ENCODE measurements at regions of chr9 and their contacts with region 1.

Region 1: DNA sequence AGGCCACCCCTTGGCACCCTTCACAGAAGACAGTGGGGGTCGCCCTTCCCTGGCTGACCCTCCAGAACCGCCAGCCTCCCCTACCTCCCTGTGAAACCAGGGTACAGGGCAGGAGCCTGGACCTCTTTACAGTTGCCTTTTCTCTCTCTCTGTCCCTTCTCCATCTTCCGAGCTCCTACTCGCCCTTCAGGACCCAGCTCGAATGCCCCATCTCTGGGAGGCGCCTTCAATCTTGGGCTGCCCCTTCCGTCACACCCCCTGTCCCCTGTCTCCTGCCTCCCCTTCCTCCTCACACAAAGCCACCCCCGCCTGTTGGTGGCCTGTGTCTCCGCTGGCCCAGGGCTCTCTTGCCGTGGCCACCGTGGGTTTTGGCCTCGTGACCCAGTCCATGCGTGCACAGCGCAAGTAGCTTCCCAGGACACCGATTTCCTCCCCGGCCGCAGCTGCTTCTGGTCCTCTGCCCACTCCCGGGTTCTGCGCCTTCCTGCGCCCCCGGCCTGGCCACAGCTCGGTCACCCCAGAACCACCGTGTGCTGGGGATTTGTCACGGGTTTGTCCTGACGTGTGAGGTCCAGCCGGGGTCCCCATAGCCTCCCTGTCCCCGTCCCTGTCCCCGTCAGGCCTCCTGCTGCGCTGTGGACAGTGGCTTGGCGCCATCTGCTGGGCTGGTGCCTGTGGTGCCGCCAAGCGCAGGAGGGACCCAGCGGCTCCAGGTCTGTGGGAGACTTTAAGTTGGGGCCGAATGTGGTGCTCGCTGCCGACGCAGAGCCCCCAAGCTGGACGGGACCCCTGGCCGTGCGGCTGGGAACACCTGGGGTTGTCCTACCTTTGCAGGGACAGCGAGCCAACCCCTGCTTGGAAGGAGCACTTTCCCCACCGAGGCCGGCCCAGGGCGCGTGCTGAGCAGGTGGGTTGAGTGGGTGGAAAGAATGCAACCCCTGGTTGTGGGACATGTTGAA is 4.0 kb upstream of the TMEM250 start:
- DNase-seq: peak; percentile 75
- H3K4me3 ChIP-seq: no peak overlapping the region
- H3K27ac ChIP-seq: no peak overlapping the region
- H3K4me1 ChIP-seq: peaks cover 18% of the 10 kb centered on the region
- H3K27me3 ChIP-seq: no peaks in the 10 kb centered on the region
- CTCF ChIP-seq: peak; percentile 98

Region 2: GRCh38 chr9:135736272-135736978 is 386.3 kb before region 1 on chr9:
- CTCF ChIA-PET with region 1: no interaction called
- POLR2A ChIA-PET with region 1: no interaction called
- intact Hi-C with region 1: no loop called
- DNase-seq: no peak
- H3K4me3 ChIP-seq: no peak overlapping the region
- H3K27ac ChIP-seq: no peak overlapping the region
- H3K4me1 ChIP-seq: no peaks in the 10 kb centered on the region
- H3K27me3 ChIP-seq: peaks cover 9% of the 10 kb centered on the region
- CTCF ChIP-seq: no peak

Region 3: GRCh38 chr9:135797507-135798262 is 325.0 kb before region 1 on chr9:
- CTCF ChIA-PET with region 1: no interaction called
- POLR2A ChIA-PET with region 1: no interaction called
- intact Hi-C with region 1: loop called (anchors 10 kb)
- DNase-seq: peak; percentile 76
- H3K4me3 ChIP-seq: no peak overlapping the region
- H3K27ac ChIP-seq: no peak overlapping the region
- H3K4me1 ChIP-seq: peaks cover 4% of the 10 kb centered on the region
- H3K27me3 ChIP-seq: no peaks in the 10 kb centered on the region
- CTCF ChIP-seq: peak; percentile 97

Region 4: GRCh38 chr9:135864447-135865049 is 258.2 kb before region 1 on chr9:
- CTCF ChIA-PET with region 1: interaction called, 8 read pairs
- POLR2A ChIA-PET with region 1: no interaction called
- intact Hi-C with region 1: loop called (anchors 2 kb)
- DNase-seq: peak; percentile 74
- H3K4me3 ChIP-seq: no peak overlapping the region
- H3K27ac ChIP-seq: no peak overlapping the region
- H3K4me1 ChIP-seq: no peaks in the 10 kb centered on the region
- H3K27me3 ChIP-seq: no peaks in the 10 kb centered on the region
- CTCF ChIP-seq: peak; percentile 92

Region 5: GRCh38 chr9:135971892-135972291 is 150.8 kb before region 1 on chr9:
- CTCF ChIA-PET with region 1: interaction called, 13 read pairs
- POLR2A ChIA-PET with region 1: interaction called, 7 read pairs
- intact Hi-C with region 1: loop called (anchors 1 kb)
- DNase-seq: no peak
- H3K4me3 ChIP-seq: no peak overlapping the region
- H3K27ac ChIP-seq: peak overlapping the region; percentile 98
- H3K4me1 ChIP-seq: peaks cover 71% of the 10 kb centered on the region
- H3K27me3 ChIP-seq: no peaks in the 10 kb centered on the region
- CTCF ChIP-seq: no peak